Lower leg skin (tissue), 4 donors: ENCODE measurements at regions of chr4 and their contacts with region 1.

Region 1: DNA sequence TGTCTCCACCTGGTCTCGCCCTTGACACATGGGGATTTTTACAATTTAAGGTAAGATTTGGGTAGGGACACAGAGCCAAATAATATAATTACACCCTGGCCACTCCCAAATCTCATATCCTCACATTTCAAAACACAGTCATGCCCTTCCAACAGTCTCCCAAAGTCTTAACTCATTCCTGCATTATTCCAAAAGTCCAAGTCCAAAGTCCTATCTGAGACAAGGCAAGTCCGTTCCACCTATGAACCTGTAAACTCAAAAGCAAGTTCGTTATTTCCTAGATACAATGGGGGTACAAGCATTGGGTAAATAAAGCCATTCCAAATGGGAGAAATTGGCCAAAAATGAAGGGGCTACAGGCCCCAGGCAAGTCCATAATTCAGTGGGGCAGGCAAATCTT is 380.8 kb downstream of the CXXC4 start:
- DNase-seq: no peak
- H3K4me3 ChIP-seq: no peak overlapping the region
- CTCF ChIP-seq: no peak
- POLR2A ChIP-seq: no peak

Region 2: DNA sequence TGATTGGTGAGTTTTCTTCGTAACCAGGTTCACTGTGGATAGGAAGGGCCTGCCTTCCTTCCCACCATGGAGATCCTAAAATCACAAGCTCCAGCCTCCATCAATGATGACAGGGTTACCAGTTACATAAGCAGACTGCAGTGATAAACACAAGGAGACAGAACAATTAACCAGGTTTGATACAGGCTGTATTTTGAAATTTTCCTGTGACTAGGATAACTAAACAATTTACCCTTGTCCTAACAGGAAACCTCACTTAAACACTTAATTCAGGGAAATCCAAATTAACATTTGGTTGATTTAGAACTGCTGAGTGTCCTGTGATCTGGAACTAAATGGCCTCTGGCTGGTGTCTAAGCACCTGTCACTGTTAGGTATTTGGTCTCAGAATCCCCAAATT is 1034.2 kb before region 1 on chr4:
- intact Hi-C with region 1: no loop called
- DNase-seq: no peak
- H3K4me3 ChIP-seq: no peak overlapping the region
- CTCF ChIP-seq: no peak
- POLR2A ChIP-seq: no peak

Region 3: DNA sequence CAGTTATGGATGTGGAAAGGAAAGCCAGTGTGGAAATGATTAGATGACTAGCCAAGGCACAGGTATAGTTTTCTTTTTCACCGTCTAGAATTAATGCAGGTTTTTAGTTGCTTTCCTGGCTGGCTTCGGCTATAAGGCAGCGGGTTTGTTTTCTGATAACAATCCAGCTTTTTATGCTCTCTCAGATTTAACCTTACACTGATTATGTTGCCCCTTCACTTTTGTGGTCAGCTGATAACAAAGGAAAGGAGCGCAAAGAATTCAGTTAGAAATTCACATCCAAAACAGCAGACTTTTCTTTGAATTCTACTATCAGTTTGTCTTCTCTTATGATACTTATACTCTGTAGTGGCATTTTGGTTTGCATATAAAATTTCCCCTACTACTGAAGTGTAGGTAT is 821.5 kb before region 1 on chr4:
- intact Hi-C with region 1: loop called (anchors 5 kb)
- DNase-seq: no peak
- H3K4me3 ChIP-seq: no peak overlapping the region
- CTCF ChIP-seq: no peak
- POLR2A ChIP-seq: no peak

Region 4: DNA sequence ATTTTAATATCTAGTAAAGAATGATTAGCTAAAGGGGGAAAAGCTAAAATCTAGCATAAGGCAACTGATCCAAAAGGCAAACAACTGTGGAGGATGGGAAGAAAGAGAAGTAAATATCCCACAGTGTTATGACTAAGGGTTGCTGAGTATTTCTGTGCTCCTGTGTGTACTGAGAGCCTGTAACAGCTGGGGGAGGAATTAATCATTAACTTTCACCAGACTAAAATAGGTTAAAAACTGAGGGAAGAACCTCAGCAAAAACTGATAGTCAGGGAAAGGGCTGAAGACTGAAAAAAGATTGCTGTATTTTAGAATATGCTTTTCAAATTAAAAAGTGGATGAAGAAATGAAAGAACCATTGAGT is 15.0 kb after region 1 on chr4:
- intact Hi-C with region 1: no loop called
- DNase-seq: no peak
- H3K4me3 ChIP-seq: no peak overlapping the region
- CTCF ChIP-seq: no peak
- POLR2A ChIP-seq: no peak

Region 5: GRCh38 chr4:104365618-104366017 is 251.8 kb after region 1 on chr4:
- intact Hi-C with region 1: no loop called
- DNase-seq: no peak
- H3K4me3 ChIP-seq: no peak overlapping the region
- CTCF ChIP-seq: no peak
- POLR2A ChIP-seq: no peak

Region 6: DNA sequence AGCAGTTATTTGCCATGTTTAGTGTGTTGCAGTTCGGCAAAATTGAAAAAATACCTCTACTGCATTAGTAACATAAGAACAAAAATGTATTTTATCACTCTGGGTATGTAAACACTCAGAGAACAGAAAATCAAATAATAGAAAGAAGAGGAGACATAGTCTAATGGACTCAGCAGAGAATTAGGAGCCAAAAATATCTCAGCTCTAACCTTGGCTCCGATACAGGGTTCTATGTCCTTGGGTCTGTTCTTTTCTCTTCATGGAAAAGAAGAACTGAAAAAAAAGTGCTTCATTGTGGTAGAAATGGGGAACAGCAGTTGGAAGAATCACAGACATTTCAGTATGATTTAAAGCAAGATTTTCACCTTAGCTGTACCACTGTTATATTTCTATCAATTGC is 621.3 kb after region 1 on chr4:
- intact Hi-C with region 1: no loop called
- DNase-seq: no peak
- H3K4me3 ChIP-seq: no peak overlapping the region
- CTCF ChIP-seq: no peak
- POLR2A ChIP-seq: no peak